Activated B cell treated with CpG ODN at 0.5 μM for 24 hours (primary cell): ENCODE measurements at regions of chr15 and their contacts with region 1.

Region 1: GRCh38 chr15:67303490-67304363 is 49.1 kb downstream of the IQCH start:
- DNase-seq: no peak
- ATAC-seq: peak; percentile 56
- H3K4me3 Mint-ChIP-seq: no peak overlapping the region
- H3K27ac Mint-ChIP-seq: no peak overlapping the region
- H3K4me1 Mint-ChIP-seq: no peaks in the 10 kb centered on the region
- H3K27me3 Mint-ChIP-seq: no peaks in the 10 kb centered on the region
- CTCF ChIP-seq: no peak

Region 2: DNA sequence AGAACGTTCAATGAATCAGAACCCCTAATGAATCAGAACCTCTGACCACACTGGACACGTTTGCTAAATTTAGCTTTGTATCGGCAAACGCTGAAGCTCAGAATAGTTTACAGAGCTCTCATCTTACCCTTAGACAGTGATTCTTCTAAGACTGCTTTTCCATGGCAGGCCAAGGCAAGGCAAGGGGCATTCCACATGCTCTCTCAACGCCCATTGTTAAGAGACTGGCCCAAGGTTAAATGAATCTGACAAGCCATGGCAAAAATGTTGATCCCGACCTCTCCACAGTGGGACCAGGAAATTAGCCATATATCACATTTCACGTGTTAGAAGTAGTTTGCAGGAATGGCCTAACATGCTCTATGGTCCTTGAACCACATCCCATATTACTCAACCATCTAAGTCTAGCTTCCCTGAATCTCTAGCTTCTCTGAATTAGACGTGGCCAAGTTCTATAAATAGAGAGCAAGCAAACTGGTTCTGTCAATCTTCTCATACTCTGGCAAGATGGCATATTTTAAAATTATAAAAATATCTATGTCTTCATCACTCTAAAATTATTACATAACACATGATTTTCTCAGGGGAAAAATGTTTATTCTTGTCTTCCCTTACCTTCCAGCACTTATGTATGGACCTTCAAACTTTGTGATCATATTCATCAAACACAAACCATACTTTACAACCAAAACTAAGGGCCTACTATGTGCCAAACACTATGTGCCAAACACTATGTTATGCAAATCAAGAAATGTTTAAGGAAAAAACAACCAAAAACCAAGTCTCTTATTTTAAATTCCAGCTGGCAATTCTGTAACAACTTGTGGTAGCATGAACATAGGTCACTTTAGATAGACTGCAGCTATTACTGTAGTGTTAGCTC is 103.6 kb before region 1 on chr15:
- CTCF ChIA-PET with region 1: no interaction called
- POLR2A ChIA-PET with region 1: no interaction called
- intact Hi-C with region 1: no loop called
- DNase-seq: no peak
- ATAC-seq: no peak
- H3K4me3 Mint-ChIP-seq: no peak overlapping the region
- H3K27ac Mint-ChIP-seq: peak overlapping the region; percentile 37
- H3K4me1 Mint-ChIP-seq: peaks cover 21% of the 10 kb centered on the region
- H3K27me3 Mint-ChIP-seq: no peaks in the 10 kb centered on the region
- CTCF ChIP-seq: no peak

Region 3: GRCh38 chr15:67224889-67225288 is 78.8 kb before region 1 on chr15:
- CTCF ChIA-PET with region 1: no interaction called
- POLR2A ChIA-PET with region 1: interaction called, 10 read pairs
- intact Hi-C with region 1: no loop called
- DNase-seq: no peak
- ATAC-seq: no peak
- H3K4me3 Mint-ChIP-seq: no peak overlapping the region
- H3K27ac Mint-ChIP-seq: no peak overlapping the region
- H3K4me1 Mint-ChIP-seq: peaks cover 17% of the 10 kb centered on the region
- H3K27me3 Mint-ChIP-seq: no peaks in the 10 kb centered on the region
- CTCF ChIP-seq: no peak

Region 4: DNA sequence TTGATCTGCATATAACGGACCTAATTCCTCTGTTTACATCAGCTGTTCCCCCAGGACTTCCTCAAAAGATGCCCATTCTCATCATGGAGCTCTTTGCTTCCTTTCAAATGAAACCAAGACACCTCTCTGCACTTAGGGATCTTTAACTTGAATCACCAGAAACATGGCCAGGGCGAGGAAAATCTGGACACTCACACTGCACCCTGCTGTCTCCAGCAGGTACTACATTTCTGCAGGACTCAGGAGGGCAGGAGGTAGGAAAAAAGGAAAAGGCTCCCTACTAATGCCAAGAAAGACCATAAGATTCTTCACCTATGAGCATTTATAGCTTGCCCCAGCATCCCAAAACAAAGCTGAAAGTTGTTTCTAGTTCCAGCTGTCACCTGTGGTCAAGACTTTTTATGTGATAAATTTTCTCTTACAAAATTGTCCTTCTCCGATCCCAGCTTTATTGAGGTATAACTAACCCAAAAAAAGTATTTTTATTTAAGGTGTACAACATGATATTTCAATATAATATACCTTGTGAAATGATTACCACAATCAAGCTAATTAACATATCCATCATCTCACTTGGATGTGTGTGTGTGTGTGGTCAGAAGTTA is 129.9 kb after region 1 on chr15:
- CTCF ChIA-PET with region 1: interaction called, 4 read pairs
- POLR2A ChIA-PET with region 1: no interaction called
- intact Hi-C with region 1: loop called (anchors 10 kb)
- DNase-seq: no peak
- ATAC-seq: peak; percentile 50
- H3K4me3 Mint-ChIP-seq: no peak overlapping the region
- H3K27ac Mint-ChIP-seq: no peak overlapping the region
- H3K4me1 Mint-ChIP-seq: no peaks in the 10 kb centered on the region
- H3K27me3 Mint-ChIP-seq: peaks cover 3% of the 10 kb centered on the region
- CTCF ChIP-seq: no peak